ENCODE measurements at regions of chr2 and their contacts with region 1.

Region 1: DNA sequence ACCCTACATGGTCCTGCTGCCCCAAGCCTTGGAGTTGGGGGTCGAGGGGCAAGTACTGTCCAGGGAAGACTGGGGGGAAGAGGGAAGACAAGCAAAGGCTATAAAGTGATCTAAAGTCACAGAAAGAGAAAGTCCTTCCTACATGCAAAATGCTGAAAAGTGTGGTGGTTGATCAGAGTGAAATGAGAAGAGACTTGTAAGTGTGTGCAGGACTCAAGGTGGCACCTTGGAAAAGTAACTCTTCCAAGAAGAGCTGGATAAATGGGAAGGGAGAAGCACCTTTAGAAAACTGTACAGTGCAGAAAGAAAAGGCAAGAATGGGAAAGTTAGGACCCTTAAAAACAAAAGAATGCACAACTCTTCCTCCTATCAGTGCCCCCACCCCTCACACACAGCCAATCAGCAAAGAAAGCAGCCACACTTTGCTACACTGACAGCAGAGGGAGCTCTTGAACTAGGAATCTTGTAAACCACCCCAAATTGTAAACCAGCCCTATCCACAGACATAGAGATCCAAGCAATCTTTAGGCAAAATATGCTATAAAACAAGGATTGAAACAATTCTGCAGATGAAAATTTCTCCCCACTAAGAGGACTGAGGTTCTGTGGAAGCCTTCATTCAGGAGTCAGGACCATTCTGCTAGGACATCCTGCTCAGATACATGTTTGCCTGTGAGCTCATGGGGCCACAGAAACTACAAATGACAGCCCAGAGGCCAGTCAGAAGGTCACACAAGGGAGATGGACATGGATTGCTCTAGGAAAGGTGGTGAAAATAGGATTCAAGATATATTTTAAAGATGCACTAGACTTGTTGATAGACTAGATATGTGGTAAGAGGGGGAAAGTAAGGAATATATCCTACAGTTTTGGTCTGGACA is 146.4 kb downstream of the FTCDNL1 start:
- DNase-seq: peak; percentile 66
- H3K4me3 Mint-ChIP-seq: no peak overlapping the region
- H3K27ac Mint-ChIP-seq: no peak overlapping the region
- H3K4me1 Mint-ChIP-seq: no peaks in the 10 kb centered on the region
- H3K27me3 Mint-ChIP-seq: peaks cover 17% of the 10 kb centered on the region
- CTCF ChIP-seq: peak; percentile 78

Region 2: DNA sequence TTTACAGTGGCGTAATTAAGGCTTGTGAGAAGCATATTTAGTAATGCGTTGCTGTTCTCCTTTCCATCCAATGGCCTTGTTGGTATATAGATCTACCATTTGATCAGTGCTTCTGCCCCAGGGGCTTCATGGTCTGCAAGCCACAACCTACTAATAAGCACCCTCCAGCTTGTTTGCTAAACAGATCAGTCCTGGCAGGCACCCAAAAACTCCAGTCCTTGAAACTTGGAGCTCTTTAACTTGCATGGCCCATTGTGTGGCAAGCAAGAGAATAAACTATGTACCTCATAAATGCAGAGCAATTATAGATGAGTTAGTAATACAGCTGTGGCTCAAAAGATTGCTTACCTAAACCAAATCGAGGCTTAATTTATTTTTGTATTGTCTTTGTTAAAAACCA is 12.1 kb before region 1 on chr2:
- CTCF ChIA-PET with region 1: interaction called, 19 read pairs
- POLR2A ChIA-PET with region 1: no interaction called
- intact Hi-C with region 1: no loop called
- DNase-seq: peak; percentile 15
- H3K4me3 Mint-ChIP-seq: no peak overlapping the region
- H3K27ac Mint-ChIP-seq: no peak overlapping the region
- H3K4me1 Mint-ChIP-seq: no peaks in the 10 kb centered on the region
- H3K27me3 Mint-ChIP-seq: peaks cover 5% of the 10 kb centered on the region
- CTCF ChIP-seq: no peak

Region 3: DNA sequence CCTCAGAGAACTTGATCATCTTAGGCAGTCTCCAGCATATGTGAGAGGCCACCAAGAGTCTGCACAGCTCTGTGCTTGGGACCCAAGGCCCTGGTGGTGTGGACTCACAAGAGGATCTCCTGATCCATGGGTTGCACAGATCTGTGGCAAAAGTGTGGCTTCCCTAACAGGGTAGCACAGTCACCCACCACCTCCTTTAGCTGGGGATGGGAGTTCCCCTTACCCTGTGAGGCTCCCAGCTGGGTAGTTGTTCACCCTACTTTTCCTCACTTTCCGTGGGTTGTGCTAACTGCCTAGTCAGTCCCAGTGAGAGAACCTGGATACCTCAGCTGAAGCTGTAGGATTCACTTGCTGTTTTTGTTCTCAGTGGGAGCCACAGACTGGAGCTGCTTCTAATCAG is 22.7 kb after region 1 on chr2:
- CTCF ChIA-PET with region 1: interaction called, 14 read pairs
- POLR2A ChIA-PET with region 1: interaction called, 3 read pairs
- intact Hi-C with region 1: no loop called
- DNase-seq: no peak
- H3K4me3 Mint-ChIP-seq: no peak overlapping the region
- H3K27ac Mint-ChIP-seq: no peak overlapping the region
- H3K4me1 Mint-ChIP-seq: no peaks in the 10 kb centered on the region
- H3K27me3 Mint-ChIP-seq: peaks cover 96% of the 10 kb centered on the region
- CTCF ChIP-seq: no peak

Region 4: GRCh38 chr2:199861132-199861774 is 156.7 kb after region 1 on chr2:
- CTCF ChIA-PET with region 1: interaction called, 19 read pairs
- POLR2A ChIA-PET with region 1: no interaction called
- intact Hi-C with region 1: loop called (anchors 1 kb)
- DNase-seq: peak; percentile 20
- H3K4me3 Mint-ChIP-seq: no peak overlapping the region
- H3K27ac Mint-ChIP-seq: no peak overlapping the region
- H3K4me1 Mint-ChIP-seq: no peaks in the 10 kb centered on the region
- H3K27me3 Mint-ChIP-seq: peaks cover 87% of the 10 kb centered on the region
- CTCF ChIP-seq: peak; percentile 50

Region 5: GRCh38 chr2:199940373-199940772 is 235.8 kb after region 1 on chr2:
- CTCF ChIA-PET with region 1: interaction called, 29 read pairs
- POLR2A ChIA-PET with region 1: no interaction called
- intact Hi-C with region 1: loop called (anchors 1 kb)
- DNase-seq: peak; percentile 30
- H3K4me3 Mint-ChIP-seq: no peak overlapping the region
- H3K27ac Mint-ChIP-seq: no peak overlapping the region
- H3K4me1 Mint-ChIP-seq: no peaks in the 10 kb centered on the region
- H3K27me3 Mint-ChIP-seq: no peaks in the 10 kb centered on the region
- CTCF ChIP-seq: peak; percentile 27

Region 6: GRCh38 chr2:200104015-200104414 is 399.4 kb after region 1 on chr2:
- CTCF ChIA-PET with region 1: no interaction called
- POLR2A ChIA-PET with region 1: no interaction called
- intact Hi-C with region 1: no loop called
- DNase-seq: peak; percentile 22
- H3K4me3 Mint-ChIP-seq: no peak overlapping the region
- H3K27ac Mint-ChIP-seq: no peak overlapping the region
- H3K4me1 Mint-ChIP-seq: peaks cover 5% of the 10 kb centered on the region
- H3K27me3 Mint-ChIP-seq: no peaks in the 10 kb centered on the region
- CTCF ChIP-seq: no peak